CD8-positive, alpha-beta T cell (primary cell): ENCODE measurements at regions of chr18 and their contacts with region 1.

Region 1: GRCh38 chr18:23071285-23071684 is 64.0 kb upstream of the CABLES1 start:
- DNase-seq: peak; percentile 63 to 95 (median 86)
- ATAC-seq: peak; percentile 92
- H3K4me3 ChIP-seq: peak overlapping the region in 1 of 2 experiments; percentile 8
- H3K4me3 Mint-ChIP-seq: peak overlapping the region; percentile 71
- H3K27ac ChIP-seq: peak overlapping the region in 1 of 2 experiments; percentile 37
- H3K27ac Mint-ChIP-seq: peak overlapping the region; percentile 85
- H3K4me1 ChIP-seq: peaks cover 52% of the 10 kb centered on the region
- H3K4me1 Mint-ChIP-seq: peaks cover 66% of the 10 kb centered on the region
- H3K27me3 ChIP-seq: no peaks in the 10 kb centered on the region
- H3K27me3 Mint-ChIP-seq: no peaks in the 10 kb centered on the region
- CTCF ChIP-seq: no peak

Region 2: DNA sequence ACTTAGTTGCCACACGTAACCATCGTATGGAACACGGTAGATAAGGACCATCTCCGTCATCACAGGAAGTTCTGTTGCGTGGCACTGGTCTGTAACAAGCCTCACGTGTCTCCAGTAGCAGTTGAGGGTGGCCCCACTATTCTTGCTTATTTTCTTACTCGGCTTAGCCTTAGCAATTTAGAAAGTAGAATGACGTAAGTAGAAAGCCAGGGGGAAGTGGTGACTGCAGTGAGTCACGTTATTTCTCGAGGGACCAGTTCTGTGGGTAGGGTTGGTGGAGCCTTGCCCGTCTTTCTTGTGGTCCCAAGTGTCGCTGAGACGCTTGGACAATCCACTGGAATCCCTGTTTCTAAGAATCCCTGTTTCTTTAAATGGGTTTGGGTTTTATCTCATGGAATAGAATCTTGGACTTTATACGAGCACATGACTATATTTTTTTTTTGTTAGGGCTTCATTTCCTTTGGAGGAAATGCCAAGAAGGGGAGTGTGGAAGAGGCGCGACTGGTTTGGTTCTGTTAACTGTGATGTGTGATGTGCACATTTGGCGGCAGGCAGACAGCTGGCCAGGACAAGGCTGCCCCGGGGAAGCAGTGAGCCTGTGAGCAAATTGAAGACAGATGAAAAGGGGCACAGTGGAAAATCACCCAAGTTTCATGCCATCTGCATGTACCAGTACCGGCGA is 160.2 kb after region 1 on chr18:
- CTCF ChIA-PET with region 1: no interaction called
- POLR2A ChIA-PET with region 1: no interaction called
- intact Hi-C with region 1: loop called in 1 of 2 experiments (anchors 2 kb)
- DNase-seq: peak; percentile 41 to 95 (median 66)
- ATAC-seq: peak; percentile 85
- H3K4me3 ChIP-seq: no peak overlapping the region
- H3K4me3 Mint-ChIP-seq: peak overlapping the region; percentile 9
- H3K27ac ChIP-seq: peak overlapping the region; percentile 5 to 84
- H3K27ac Mint-ChIP-seq: peak overlapping the region; percentile 92
- H3K4me1 ChIP-seq: peaks cover 11% of the 10 kb centered on the region
- H3K4me1 Mint-ChIP-seq: peaks cover 23% of the 10 kb centered on the region
- H3K27me3 ChIP-seq: no peaks in the 10 kb centered on the region
- H3K27me3 Mint-ChIP-seq: no peaks in the 10 kb centered on the region
- CTCF ChIP-seq: no peak

Region 3: GRCh38 chr18:23437357-23438045 is 366.2 kb after region 1 on chr18:
- CTCF ChIA-PET with region 1: no interaction called
- POLR2A ChIA-PET with region 1: no interaction called
- intact Hi-C with region 1: loop called in 1 of 2 experiments (anchors 5 kb)
- DNase-seq: peak; percentile 46 to 81 (median 77)
- ATAC-seq: peak; percentile 95
- H3K4me3 ChIP-seq: peak overlapping the region; percentile 81 to 96
- H3K4me3 Mint-ChIP-seq: peak overlapping the region; percentile 88
- H3K27ac ChIP-seq: peak overlapping the region in 1 of 2 experiments; percentile 21
- H3K27ac Mint-ChIP-seq: no peak overlapping the region
- H3K4me1 ChIP-seq: peaks cover 17% of the 10 kb centered on the region
- H3K4me1 Mint-ChIP-seq: peaks cover 22% of the 10 kb centered on the region
- H3K27me3 ChIP-seq: peaks cover 0 to 2% of the 10 kb centered on the region in 2 experiments
- H3K27me3 Mint-ChIP-seq: no peaks in the 10 kb centered on the region
- CTCF ChIP-seq: no peak

Region 4: GRCh38 chr18:23452728-23453679 is 381.7 kb after region 1 on chr18 and contains the start of gene RIOK3:
- CTCF ChIA-PET with region 1: no interaction called
- POLR2A ChIA-PET with region 1: no interaction called
- intact Hi-C with region 1: loop called in 1 of 2 experiments (anchors 5 kb)
- DNase-seq: peak; percentile 71 to 93 (median 85)
- ATAC-seq: peak; percentile 90
- H3K4me3 ChIP-seq: peak within 1 kb of the TSS; percentile 69 to 97
- H3K4me3 Mint-ChIP-seq: peak within 1 kb of the TSS; percentile 99
- H3K27ac ChIP-seq: peak within 1 kb of the TSS; percentile 65 to 85
- H3K27ac Mint-ChIP-seq: peak within 1 kb of the TSS; percentile 94
- H3K4me1 ChIP-seq: peaks cover 32% of the 10 kb centered on the region
- H3K4me1 Mint-ChIP-seq: peaks cover 49% of the 10 kb centered on the region
- H3K27me3 ChIP-seq: no peaks in the 10 kb centered on the region
- H3K27me3 Mint-ChIP-seq: no peaks in the 10 kb centered on the region
- CTCF ChIP-seq: no peak
- total RNA-seq, gene RIOK3: 159 to 185 TPM

Region 5: DNA sequence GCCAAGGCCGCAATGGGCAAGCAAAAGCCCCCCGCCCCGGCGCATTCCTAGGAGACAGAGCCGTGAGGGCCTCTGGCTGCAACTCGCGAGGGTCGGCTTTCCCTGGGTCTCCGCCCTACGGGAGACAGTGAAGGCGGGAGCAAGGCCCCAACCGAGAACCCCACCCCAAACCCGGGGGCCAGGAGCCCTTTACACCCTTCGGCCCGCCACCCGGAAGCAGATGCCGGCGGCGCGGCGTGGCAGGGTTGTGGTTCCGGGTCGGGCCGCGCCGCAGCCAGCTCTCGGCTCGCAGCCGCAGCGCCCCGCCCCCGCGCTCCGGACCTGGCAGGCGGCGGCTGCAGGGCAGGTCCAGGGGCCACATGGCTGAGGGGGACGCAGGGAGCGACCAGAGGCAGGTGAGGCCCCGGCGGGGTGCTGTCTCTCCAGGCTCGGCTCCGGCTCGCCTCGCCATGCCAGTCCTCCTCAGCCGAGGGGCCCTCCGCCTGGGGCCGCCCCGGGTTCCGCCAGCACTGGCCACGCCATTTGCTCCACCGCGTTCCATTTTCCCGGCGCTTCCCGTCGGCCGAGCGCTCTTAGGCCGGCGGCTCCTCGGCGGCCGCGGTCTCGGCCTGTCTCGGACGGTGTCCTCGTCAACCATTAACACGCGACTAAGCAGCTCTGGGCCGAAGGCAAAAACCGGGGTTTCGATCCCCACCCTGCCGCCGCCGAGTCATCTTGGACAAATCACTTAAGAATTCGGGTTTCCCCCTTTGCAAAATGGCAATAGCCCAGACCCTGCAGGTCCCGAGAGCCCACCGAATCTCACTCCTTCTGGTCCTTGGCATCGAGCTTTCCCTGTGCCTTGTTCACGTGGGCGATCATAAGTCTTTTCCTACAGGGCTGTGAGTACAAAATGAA is 1355.4 kb after region 1 on chr18 and contains the start of gene IMPACT:
- CTCF ChIA-PET with region 1: no interaction called
- POLR2A ChIA-PET with region 1: no interaction called
- intact Hi-C with region 1: loop called in 1 of 2 experiments (anchors 10 kb)
- DNase-seq: peak; percentile 56 to 90 (median 76)
- ATAC-seq: peak; percentile 83
- H3K4me3 ChIP-seq: peak within 1 kb of the TSS; percentile 73 to 81
- H3K4me3 Mint-ChIP-seq: peak within 1 kb of the TSS; percentile 87
- H3K27ac ChIP-seq: peak within 1 kb of the TSS; percentile 43 to 64
- H3K27ac Mint-ChIP-seq: peak within 1 kb of the TSS; percentile 92
- H3K4me1 ChIP-seq: peaks cover 24% of the 10 kb centered on the region
- H3K4me1 Mint-ChIP-seq: peaks cover 21% of the 10 kb centered on the region
- H3K27me3 ChIP-seq: peaks cover 0 to 3% of the 10 kb centered on the region in 2 experiments
- H3K27me3 Mint-ChIP-seq: peaks cover 25% of the 10 kb centered on the region
- CTCF ChIP-seq: no peak
- total RNA-seq, gene IMPACT: 6.5 to 10.0 TPM